ENCODE measurements at regions of chr6 and their contacts with region 1.

Region 1: GRCh38 chr6:158040051-158040803 is 58.6 kb downstream of the SYNJ2 start:
- DNase-seq: no peak
- H3K4me3 ChIP-seq: no peak overlapping the region
- H3K27ac ChIP-seq: peak overlapping the region; percentile 94
- H3K4me1 ChIP-seq: peaks cover 59% of the 10 kb centered on the region
- H3K27me3 ChIP-seq: no peaks in the 10 kb centered on the region
- CTCF ChIP-seq: no peak

Region 2: DNA sequence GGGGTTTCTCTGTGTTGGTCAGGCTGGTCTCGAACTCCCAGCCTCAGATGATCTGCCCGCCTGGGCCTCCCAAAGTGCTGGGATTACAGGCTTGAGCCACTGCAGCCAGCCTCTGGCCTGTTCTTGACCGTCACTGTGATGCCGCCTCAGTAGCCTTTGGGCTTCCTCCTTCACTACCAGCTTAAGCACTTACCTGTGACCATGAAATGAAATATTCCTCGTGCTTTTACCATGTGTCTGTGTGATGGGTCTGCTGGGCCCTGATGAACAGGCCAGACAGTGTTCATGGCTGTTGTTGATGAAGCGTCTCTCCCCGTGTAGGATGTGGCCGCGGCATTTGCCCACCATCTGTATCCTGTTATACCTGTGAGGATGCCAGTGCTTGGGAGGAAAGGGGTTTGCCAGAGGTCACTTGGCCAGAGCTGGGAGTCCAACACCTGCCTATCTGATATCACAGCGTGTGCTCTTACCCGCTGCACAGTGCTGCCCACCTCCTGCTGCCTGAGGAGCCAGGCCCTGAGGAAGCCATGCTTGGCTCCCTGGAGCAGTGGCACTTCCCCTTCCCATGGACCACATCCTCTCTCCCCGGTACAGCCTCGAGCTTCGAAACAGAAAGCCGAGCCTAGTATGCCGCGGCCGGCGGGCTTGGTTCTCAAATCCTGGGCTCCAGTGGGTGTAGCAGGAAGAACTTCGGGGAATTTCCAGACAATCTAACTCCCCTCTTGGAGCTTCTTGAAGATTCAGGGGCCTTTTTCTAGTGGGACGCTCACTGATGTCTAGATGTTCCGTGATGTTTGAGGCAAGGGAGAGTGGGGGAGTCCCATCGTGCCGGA is 491.4 kb before region 1 on chr6:
- intact Hi-C with region 1: no loop called
- DNase-seq: peak; percentile 23
- H3K4me3 ChIP-seq: peak overlapping the region; percentile 30
- H3K27ac ChIP-seq: no peak overlapping the region
- H3K4me1 ChIP-seq: peaks cover 7% of the 10 kb centered on the region
- H3K27me3 ChIP-seq: no peaks in the 10 kb centered on the region
- CTCF ChIP-seq: no peak

Region 3: DNA sequence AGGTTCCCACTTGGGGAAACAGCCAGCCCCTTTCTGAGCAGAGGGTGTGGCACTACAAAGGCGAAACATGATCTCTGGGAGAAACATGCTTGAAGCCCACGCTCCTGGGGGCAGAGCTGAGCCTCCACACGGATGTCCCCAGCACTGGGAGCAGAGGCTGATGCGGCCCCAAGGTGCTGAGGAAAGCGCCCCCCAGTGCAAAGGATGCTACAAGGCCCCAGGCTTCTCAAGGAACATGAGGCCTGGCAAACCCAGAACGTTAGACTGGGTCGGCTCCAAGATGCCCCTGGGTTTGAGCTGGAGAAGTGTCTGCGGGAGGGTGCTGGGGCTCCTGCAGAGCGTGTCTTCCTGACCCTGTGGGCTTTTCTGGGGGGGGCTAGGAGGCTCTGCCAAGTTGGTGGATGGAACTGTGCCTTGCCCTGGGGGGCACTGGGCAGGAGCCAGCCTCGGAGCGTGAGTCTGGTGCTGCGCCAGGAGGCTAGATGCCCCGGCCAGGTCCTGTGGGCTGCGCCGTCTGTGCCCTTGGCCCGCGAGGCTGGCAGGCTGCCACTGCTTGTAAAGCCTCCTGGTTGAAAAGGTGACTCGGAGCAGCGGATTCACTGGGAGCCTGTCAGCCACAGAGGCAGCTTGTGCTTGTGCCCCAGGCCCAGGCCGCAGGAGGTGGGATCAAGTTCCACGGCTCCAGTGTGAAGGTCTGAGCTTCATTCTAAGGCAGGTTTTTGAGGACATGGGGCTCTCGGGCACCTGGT is 50.5 kb before region 1 on chr6:
- intact Hi-C with region 1: loop called (anchors 10 kb)
- DNase-seq: peak; percentile 80
- H3K4me3 ChIP-seq: no peak overlapping the region
- H3K27ac ChIP-seq: peak overlapping the region; percentile 71
- H3K4me1 ChIP-seq: peaks cover 52% of the 10 kb centered on the region
- H3K27me3 ChIP-seq: no peaks in the 10 kb centered on the region
- CTCF ChIP-seq: no peak

Measured in left ventricle myocardium inferior (tissue), 1 donor.